ENCODE measurements at regions of chr20 and their contacts with region 1.

Region 1: DNA sequence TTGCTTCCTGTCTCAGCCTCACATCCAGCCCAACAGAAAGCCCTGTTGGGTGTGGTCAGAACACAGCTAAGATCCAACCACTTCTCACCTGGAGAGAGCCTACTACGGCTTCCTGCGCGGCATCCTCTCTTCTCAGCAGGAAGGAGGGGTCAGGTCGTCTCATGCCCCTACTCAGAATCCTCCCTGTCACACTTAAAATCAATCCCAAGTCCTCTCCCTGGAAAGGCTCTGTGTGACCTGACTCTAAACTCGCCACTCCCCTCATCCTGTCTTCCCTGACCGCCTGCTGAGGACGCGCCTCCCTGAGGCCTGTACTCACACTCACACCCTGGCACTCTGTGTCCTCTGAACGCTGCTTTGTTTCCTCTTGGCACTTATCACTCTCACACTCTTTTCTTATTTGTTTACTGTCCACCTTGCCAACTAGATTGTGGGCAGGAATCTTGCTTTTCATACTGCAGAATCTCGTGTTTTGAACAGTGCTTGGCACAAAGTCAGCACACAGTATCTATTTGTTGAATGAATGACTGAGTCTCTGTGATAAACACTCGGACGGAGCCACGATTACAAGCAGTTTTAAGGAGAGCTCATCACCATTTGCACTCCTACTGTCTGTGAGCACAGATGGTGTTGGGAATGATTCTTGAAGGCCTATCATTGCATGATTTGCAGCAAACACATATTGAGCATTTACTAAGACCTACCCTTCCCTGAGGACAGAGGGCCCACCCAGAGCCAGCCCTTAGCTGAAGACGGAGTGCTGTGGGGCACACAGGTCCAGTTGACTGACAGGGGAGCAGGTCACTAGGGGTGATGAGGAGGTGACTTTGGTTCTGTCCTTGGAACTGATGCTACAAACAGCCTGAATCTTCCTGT is 18.7 kb downstream of the RAB5IF start:
- DNase-seq: no peak
- H3K4me3 ChIP-seq: no peak overlapping the region
- H3K27ac ChIP-seq: no peak overlapping the region
- H3K4me1 ChIP-seq: peaks cover 0 to 4% (median 1%) of the 10 kb centered on the region in 4 experiments; a peak in 3 of 7 replicates
- H3K27me3 ChIP-seq: no peaks in the 10 kb centered on the region
- CTCF ChIP-seq: no peak
- EP300 ChIP-seq: no peak
- POLR2A ChIP-seq: no peak
- RAD21 ChIP-seq: 0 out of 4 replicates have a peak, but pooled peaks of 1 of the 2 experiments have one; percentile 12

Region 2: GRCh38 chr20:36305602-36306551 is 318.4 kb before region 1 on chr20 and contains the start of gene DLGAP4:
- CTCF ChIA-PET with region 1: no interaction called
- POLR2A ChIA-PET with region 1: no interaction called
- DNase-seq: peak in 1 of 2 experiments; percentile 65
- H3K4me3 ChIP-seq: peak within 1 kb of the TSS; percentile 57 to 80 (median 63)
- H3K27ac ChIP-seq: no peak within 1 kb of the TSS
- H3K4me1 ChIP-seq: peaks cover 0 to 9% (median 4%) of the 10 kb centered on the region in 4 experiments; a peak in 6 of 7 replicates
- H3K27me3 ChIP-seq: peaks cover 0 to 30% (median 22%) of the 10 kb centered on the region in 4 experiments; a peak in 6 of 7 replicates
- CTCF ChIP-seq: peak; percentile 1 to 28 (median 21); a peak in 3 of 4 replicates
- EP300 ChIP-seq: no peak
- POLR2A ChIP-seq: no peak
- RAD21 ChIP-seq: peak; percentile 35 to 50
- total RNA-seq, gene DLGAP4: 57.2 and 61.8 TPM in 2 replicates

Region 3: GRCh38 chr20:36411861-36412454 is 212.3 kb before region 1 on chr20:
- CTCF ChIA-PET with region 1: no interaction called
- POLR2A ChIA-PET with region 1: no interaction called
- DNase-seq: no peak
- H3K4me3 ChIP-seq: no peak overlapping the region
- H3K27ac ChIP-seq: no peak overlapping the region
- H3K4me1 ChIP-seq: no peaks in the 10 kb centered on the region
- H3K27me3 ChIP-seq: no peaks in the 10 kb centered on the region; a peak in 1 of 7 replicates
- CTCF ChIP-seq: no peak
- EP300 ChIP-seq: no peak
- POLR2A ChIP-seq: no peak
- RAD21 ChIP-seq: no peak

Region 4: DNA sequence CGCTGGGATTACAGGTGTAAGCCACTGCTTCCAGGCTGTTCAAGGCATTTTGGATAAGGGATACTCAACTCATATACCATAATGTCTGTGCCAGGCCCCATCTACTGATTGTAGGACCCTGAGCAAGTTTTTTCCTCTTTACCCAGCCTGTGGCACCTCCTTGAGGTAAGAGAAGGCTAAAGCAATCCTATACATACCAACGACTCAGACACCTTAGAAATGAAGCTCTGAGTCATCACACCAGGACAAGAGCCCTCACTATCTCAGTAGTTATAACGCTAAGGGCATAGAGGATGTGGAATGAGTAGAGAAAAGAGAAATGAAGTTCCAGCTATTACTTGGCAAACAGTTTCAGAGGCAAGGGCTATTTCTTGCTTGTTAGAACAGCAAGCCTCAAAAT is 104.7 kb after region 1 on chr20:
- CTCF ChIA-PET with region 1: interaction called, 10 read pairs
- POLR2A ChIA-PET with region 1: no interaction called
- DNase-seq: no peak
- H3K4me3 ChIP-seq: no peak overlapping the region
- H3K27ac ChIP-seq: no peak overlapping the region
- H3K4me1 ChIP-seq: peaks cover 0 to 3% (median 0%) of the 10 kb centered on the region in 4 experiments; a peak in 2 of 7 replicates
- H3K27me3 ChIP-seq: no peaks in the 10 kb centered on the region
- CTCF ChIP-seq: peak in 2 of 3 experiments; percentile 59 to 64; a peak in 3 of 4 replicates
- EP300 ChIP-seq: no peak
- POLR2A ChIP-seq: no peak
- RAD21 ChIP-seq: peak; percentile 77 to 83

Measured in H1 (cell line).